ENCODE measurements at regions of chr7 and their contacts with region 1.

Region 1: GRCh38 chr7:5525271-5526099 is 101.9 kb upstream of the TNRC18 start:
- DNase-seq: no peak
- ATAC-seq: peak in 3 of 8 donors; percentile 0 to 5 (median 0)
- H3K4me3 ChIP-seq: peak overlapping the region in 1 of 10 donors; percentile 98
- H3K27ac ChIP-seq: peak overlapping the region in 7 of 10 donors; percentile 41 to 100 (median 100)
- H3K4me1 ChIP-seq: peaks cover 0 to 28% (median 23%) of the 10 kb centered on the region in 9 donors
- H3K27me3 ChIP-seq: no peaks in the 10 kb centered on the region
- CTCF ChIP-seq: no peak

Region 2: GRCh38 chr7:5557920-5558401 is 32.5 kb after region 1 on chr7:
- intact Hi-C with region 1: loop called in 1 of 10 experiments (anchors 2 kb)
- DNase-seq: peak; percentile 65 to 76
- ATAC-seq: peak; percentile 13 to 57 (median 42)
- H3K4me3 ChIP-seq: peak overlapping the region in 7 of 10 donors; percentile 21 to 72 (median 31)
- H3K27ac ChIP-seq: peak overlapping the region; percentile 90 to 100 (median 100)
- H3K4me1 ChIP-seq: peaks cover 30 to 69% (median 61%) of the 10 kb centered on the region in 9 donors
- H3K27me3 ChIP-seq: no peaks in the 10 kb centered on the region
- CTCF ChIP-seq: no peak